ENCODE measurements at regions of chr6 and their contacts with region 1.

Region 1: GRCh38 chr6:79777713-79778579 is 146.8 kb downstream of the SH3BGRL2 start:
- DNase-seq: peak; percentile 92
- ATAC-seq: peak; percentile 96
- H3K4me3 Mint-ChIP-seq: peak overlapping the region; percentile 57
- H3K27ac Mint-ChIP-seq: no peak overlapping the region
- H3K4me1 Mint-ChIP-seq: peaks cover 7% of the 10 kb centered on the region
- H3K27me3 Mint-ChIP-seq: peaks cover 4% of the 10 kb centered on the region
- CTCF ChIP-seq: peak; percentile 97

Region 2: DNA sequence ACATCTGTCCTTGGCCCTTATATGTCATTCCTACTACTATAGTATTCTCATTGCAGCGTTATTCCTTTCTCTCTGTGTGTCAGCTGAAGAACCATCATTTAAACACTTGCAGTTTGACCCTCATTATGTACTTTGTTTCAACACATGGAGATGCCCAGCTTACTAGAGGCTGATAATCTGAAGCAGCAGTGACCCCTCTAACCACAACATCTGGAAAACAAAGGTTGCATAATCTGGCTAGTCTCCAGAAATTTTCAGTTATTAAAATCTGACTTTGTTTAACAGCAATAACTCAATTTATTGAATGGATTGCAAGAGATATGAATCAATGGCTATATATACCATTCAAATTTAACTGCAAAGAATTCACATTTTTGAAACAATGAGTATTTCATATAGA is 693.3 kb before region 1 on chr6:
- CTCF ChIA-PET with region 1: no interaction called
- POLR2A ChIA-PET with region 1: no interaction called
- DNase-seq: no peak
- ATAC-seq: no peak
- H3K4me3 Mint-ChIP-seq: no peak overlapping the region
- H3K27ac Mint-ChIP-seq: no peak overlapping the region
- H3K4me1 Mint-ChIP-seq: peaks cover 19% of the 10 kb centered on the region
- H3K27me3 Mint-ChIP-seq: peaks cover 5% of the 10 kb centered on the region; the same call in 1 of the 2 replicates
- CTCF ChIP-seq: no peak

Region 3: GRCh38 chr6:79762370-79762769 is 15.6 kb before region 1 on chr6:
- CTCF ChIA-PET with region 1: interaction called, 11 read pairs
- POLR2A ChIA-PET with region 1: no interaction called
- DNase-seq: no peak
- ATAC-seq: peak; percentile 80
- H3K4me3 Mint-ChIP-seq: no peak overlapping the region
- H3K27ac Mint-ChIP-seq: no peak overlapping the region
- H3K4me1 Mint-ChIP-seq: no peaks in the 10 kb centered on the region
- H3K27me3 Mint-ChIP-seq: no peaks in the 10 kb centered on the region
- CTCF ChIP-seq: no peak

Region 4: DNA sequence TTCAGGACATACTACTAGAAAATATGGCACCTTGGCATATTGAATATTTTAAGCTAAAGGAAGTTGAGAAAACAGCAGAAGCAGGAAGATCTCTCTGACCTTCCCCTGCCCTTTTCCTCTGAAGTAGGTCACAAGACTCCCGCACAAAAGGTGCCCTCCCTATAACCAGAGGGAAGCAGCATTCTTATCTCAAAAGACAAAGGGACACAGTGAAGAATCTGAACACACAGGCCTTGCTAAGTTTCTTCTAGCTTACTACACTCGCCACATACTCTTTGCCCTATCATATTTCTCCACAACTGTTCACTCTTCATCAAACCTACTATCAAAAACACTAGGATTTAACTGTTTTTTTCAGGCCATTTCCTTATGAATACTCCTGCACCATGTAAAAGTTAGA is 18.3 kb after region 1 on chr6:
- CTCF ChIA-PET with region 1: interaction called, 11 read pairs
- POLR2A ChIA-PET with region 1: no interaction called
- DNase-seq: no peak
- ATAC-seq: no peak
- H3K4me3 Mint-ChIP-seq: no peak overlapping the region
- H3K27ac Mint-ChIP-seq: no peak overlapping the region; the same call in 1 of the 2 replicates
- H3K4me1 Mint-ChIP-seq: peaks cover 4% of the 10 kb centered on the region
- H3K27me3 Mint-ChIP-seq: no peaks in the 10 kb centered on the region
- CTCF ChIP-seq: no peak

Region 5: DNA sequence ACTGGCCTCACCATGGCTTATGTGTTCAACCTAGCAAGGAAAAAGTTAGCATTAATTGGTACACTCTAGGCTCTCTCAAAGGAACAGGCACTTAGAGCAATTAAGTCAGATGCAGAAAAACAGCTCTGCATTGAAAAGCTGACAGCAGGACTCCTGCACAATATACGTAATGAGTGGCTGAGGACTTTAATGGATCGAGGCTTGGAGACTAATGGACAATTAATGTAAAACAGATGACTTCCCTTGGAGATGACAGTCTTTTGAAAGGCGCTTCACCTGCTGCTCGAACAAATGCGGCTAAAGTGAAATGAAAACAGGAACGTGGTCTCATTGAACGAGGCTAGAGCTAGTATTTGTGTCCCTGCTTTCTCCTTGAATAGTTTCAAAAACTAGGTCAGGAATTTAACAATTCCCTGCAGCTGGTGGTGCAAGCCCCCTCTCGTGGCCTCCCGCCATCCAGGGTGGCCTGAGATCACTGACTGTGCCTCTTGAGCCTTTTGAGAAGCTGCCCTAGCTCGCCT is 32.3 kb after region 1 on chr6:
- CTCF ChIA-PET with region 1: interaction called, 32 read pairs
- POLR2A ChIA-PET with region 1: no interaction called
- DNase-seq: no peak
- ATAC-seq: peak; percentile 55
- H3K4me3 Mint-ChIP-seq: no peak overlapping the region
- H3K27ac Mint-ChIP-seq: no peak overlapping the region
- H3K4me1 Mint-ChIP-seq: peaks cover 31% of the 10 kb centered on the region
- H3K27me3 Mint-ChIP-seq: peaks cover 6% of the 10 kb centered on the region; the same call in 1 of the 2 replicates
- CTCF ChIP-seq: no peak

Region 6: DNA sequence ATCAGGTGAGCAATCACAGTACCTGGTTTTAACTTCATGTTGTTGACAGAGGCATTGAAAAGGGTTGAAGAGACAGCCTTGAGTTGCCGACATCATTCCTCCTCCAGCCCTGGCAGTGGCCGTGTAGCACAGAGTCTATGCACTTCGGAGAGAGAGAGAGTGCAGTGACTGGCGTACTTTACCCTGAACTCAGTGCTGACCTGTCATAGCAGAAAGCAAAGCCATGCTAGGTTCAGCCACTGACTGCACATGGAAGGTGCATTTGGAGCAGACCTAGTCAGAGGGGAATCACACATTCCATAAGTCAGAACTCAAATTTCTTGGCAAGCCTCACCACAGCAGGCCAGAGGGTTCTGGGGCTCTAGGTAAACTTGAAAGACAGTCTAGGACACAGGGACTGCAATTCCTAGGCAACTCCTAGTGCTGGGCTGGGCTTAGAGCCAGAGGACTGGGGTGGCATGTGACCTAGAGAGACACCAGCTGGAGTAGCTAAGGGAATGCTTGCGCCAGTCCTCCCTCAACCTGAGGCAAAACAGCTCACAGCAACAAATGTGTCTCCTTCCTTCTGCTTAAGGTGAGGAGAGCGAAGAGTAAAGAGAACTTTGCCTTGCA is 100.3 kb after region 1 on chr6:
- CTCF ChIA-PET with region 1: no interaction called
- POLR2A ChIA-PET with region 1: no interaction called
- DNase-seq: no peak
- ATAC-seq: no peak
- H3K4me3 Mint-ChIP-seq: no peak overlapping the region
- H3K27ac Mint-ChIP-seq: no peak overlapping the region
- H3K4me1 Mint-ChIP-seq: 0 out of 2 replicates have a peak, but pooled peaks cover 5% of the 10 kb centered on the region
- H3K27me3 Mint-ChIP-seq: no peaks in the 10 kb centered on the region
- CTCF ChIP-seq: no peak

Measured in WTC11 (cell line).